CD4-positive, alpha-beta T cell (primary cell): ENCODE measurements at regions of chr16 and their contacts with region 1.

Region 1: DNA sequence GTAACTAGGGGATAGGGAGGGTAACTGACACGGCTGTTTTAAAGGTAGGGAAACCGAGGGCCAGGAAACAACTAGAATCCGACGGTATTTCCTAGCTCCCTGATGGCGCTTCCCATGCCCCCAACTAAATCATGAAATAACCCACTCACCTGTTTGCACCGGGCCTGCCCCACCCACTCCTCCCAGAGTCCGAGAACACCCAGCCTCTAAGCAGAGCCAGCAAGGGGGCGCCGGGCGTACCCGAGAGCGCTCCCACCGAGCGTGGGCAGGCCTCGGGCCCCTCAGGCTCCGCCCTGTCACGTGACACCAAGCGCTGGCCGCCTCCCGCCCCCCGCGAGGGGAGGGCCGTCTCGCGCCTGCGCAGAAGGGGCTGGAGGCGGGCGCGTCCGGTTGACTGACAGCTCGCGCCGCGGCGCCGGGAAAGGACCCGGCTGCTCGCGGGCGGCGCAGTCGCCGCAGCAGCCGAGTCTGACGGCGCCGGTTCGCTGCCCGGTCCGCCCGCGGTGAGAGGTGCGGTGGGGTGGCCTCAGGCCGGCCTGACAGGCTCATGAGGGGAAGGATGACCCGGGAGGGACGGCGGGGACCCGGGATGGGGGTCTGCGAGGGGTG is at the start of gene KIAA0513:
- DNase-seq: peak; percentile 91 to 98 (median 96)
- ATAC-seq: peak; percentile 64
- H3K4me3 ChIP-seq: peak within 1 kb of the TSS; percentile 87
- H3K4me3 Mint-ChIP-seq: peak within 1 kb of the TSS; percentile 98
- H3K27ac ChIP-seq: peak within 1 kb of the TSS; percentile 46 to 77
- H3K27ac Mint-ChIP-seq: peak within 1 kb of the TSS; percentile 93
- H3K4me1 ChIP-seq: peaks cover 35% of the 10 kb centered on the region
- H3K4me1 Mint-ChIP-seq: peaks cover 40% of the 10 kb centered on the region
- H3K27me3 ChIP-seq: no peaks in the 10 kb centered on the region
- H3K27me3 Mint-ChIP-seq: no peaks in the 10 kb centered on the region
- CTCF ChIP-seq: no peak
- total RNA-seq, gene KIAA0513: 9.0 to 10.9 TPM

Region 2: DNA sequence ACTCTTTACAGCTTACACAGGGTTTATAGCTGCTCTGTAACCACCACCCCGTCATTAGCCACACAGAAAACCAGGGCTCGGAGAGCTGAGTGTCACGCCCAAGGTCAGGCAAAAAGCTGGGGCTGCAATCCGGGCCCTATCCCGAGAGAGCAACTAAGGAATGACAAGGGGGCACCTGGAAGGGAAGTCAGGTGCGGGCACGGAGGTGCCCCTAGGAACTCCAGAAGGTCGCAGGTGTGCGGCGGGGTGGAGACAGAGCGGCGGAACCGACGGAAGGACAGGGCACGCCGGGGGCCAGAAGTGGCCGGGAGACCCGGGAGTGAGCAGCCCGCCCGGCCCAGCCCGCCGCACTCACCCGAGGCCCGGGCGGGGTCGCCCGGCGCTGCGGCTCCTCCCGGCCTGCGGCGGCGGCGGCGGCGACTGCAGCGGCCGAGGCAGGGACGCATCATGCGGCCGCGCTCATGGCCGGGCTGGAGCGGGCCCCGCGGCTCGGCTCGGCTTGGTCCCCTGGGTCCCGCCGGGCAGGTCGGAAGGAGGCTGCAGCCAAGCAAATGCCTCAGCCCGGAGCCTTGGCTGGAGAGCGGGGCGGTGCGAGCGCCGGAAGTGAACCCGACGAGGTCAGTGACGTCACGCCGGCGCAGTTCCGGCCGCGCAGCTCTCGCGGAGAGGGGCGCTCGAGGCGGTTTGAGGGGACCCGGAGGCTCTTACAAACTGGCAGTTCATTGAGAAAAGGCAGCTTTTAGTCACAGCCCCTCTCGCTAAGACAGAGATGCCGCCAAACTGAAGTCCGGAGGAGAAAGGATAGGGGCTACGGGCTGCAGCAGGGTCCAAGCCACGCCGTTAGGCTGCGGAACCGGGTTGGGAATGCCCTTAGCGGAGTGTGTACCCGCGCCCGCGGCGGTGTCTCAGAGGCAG is 16.3 kb before region 1 on chr16 and contains the start of gene ZDHHC7:
- CTCF ChIA-PET with region 1: interaction called, 20 read pairs
- POLR2A ChIA-PET with region 1: interaction called, 23 read pairs
- intact Hi-C with region 1: loop called (anchors 1 to 2 kb)
- DNase-seq: peak; percentile 75 to 95 (median 80)
- ATAC-seq: peak; percentile 93
- H3K4me3 ChIP-seq: peak within 1 kb of the TSS; percentile 98
- H3K4me3 Mint-ChIP-seq: peak within 1 kb of the TSS; percentile 99
- H3K27ac ChIP-seq: peak within 1 kb of the TSS; percentile 94 to 98
- H3K27ac Mint-ChIP-seq: peak within 1 kb of the TSS; percentile 96
- H3K4me1 ChIP-seq: peaks cover 31% of the 10 kb centered on the region
- H3K4me1 Mint-ChIP-seq: peaks cover 54% of the 10 kb centered on the region
- H3K27me3 ChIP-seq: no peaks in the 10 kb centered on the region
- H3K27me3 Mint-ChIP-seq: no peaks in the 10 kb centered on the region
- CTCF ChIP-seq: peak; percentile 25
- total RNA-seq, gene ZDHHC7: 39.8 to 44.6 TPM

Region 3: DNA sequence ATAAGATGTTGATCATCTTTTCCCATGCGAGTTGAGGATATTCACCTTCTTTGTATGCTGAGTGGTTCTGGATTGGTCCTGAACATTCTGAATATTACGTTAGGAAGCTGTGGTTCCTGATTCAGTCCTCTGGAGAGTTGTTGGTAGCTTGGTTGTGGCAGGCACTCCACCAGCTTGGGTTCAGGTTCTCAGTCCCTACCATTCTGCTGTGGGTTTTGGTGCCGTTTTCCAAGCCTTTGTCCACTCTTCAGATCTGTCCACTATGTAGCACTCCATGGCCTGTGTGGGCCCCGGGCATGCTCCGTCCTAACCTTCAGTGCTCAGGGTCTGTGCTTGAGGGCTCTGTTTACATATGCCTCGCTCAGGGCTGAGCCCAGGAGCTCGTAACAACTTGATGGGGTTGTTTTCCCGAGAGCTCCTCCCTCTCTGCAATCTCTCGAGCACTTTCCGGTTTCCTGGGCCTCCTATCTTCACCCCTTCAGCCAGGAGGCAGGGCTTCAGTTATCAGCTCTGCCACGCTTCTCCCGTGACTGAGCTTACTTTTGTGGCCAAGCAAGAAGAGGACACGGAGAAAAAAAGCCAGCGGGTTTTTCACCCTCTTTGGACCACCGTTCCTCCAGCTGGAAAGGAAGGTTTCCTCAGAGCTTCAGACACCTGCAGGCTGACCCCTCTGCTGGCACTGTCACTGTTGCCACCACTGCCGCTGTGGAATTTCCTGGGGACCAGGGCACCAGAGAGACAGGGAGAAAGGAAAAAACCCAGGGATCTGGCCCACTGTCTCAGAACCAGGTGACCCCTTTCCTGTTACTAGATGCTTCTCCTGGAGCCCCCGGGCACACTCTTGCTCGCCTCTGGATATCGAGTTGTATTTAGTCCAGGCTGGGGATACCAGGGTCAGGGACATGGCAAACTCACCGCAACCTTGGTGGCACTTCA is 19.7 kb after region 1 on chr16:
- CTCF ChIA-PET with region 1: no interaction called
- POLR2A ChIA-PET with region 1: interaction called, 11 read pairs
- intact Hi-C with region 1: loop called in 1 of 2 experiments (anchors 2 kb)
- DNase-seq: peak in 4 of 14 experiments; percentile 4 to 41 (median 26)
- ATAC-seq: peak; percentile 97
- H3K4me3 ChIP-seq: peak overlapping the region; percentile 5
- H3K4me3 Mint-ChIP-seq: peak overlapping the region; percentile 75
- H3K27ac ChIP-seq: no peak overlapping the region
- H3K27ac Mint-ChIP-seq: peak overlapping the region; percentile 92
- H3K4me1 ChIP-seq: peaks cover 18% of the 10 kb centered on the region
- H3K4me1 Mint-ChIP-seq: peaks cover 42% of the 10 kb centered on the region
- H3K27me3 ChIP-seq: no peaks in the 10 kb centered on the region
- H3K27me3 Mint-ChIP-seq: no peaks in the 10 kb centered on the region
- CTCF ChIP-seq: no peak

Region 4: DNA sequence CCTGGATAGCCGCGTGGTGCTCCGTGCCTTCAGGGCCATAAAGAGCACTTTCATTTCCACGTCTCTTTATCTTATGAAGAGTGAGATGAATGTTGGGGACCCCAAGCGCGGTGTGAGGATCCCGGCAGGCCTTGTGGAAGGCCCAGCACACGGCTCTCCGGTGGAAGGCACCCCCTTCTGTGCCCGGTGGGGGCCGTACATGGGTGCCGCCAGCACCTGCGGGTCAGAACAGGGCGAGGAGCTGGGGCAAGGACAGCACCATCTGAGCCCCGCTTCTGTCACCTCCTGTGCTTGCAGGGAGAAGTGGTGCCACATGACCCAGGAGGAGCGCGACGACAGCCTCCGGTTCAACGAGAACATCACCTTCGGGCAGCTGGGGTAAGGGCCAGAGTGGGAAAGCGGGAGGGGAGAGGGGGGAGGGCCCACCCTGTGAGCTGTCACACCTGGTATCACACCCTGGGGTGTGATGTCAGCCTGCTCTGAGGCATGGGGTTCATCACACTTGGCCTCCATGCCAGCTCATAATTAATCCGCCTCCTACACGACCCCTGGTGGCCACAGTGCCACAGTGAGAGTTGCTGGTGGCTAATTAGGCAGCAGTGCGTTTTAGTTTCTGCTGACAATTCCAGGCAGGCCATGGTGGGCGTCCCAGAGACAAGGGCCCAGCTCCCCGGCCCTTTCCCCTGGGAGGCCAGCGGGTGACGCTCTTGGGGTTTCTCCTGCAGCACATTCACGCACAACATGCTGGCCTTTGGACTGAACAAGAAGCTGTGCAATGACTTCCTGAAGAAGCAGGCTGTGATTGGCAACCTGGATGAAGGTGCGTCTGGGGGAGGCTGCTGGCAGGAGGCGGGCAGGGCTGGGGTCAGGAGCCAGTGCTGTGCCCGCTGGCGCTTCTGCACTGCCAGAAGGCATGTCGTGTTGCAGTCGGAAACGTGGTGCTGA is 59.2 kb after region 1 on chr16:
- CTCF ChIA-PET with region 1: interaction called, 23 read pairs
- POLR2A ChIA-PET with region 1: interaction called, 15 read pairs
- intact Hi-C with region 1: loop called (anchors 1 to 5 kb)
- DNase-seq: peak; percentile 61 to 86 (median 72)
- ATAC-seq: peak; percentile 81
- H3K4me3 ChIP-seq: no peak overlapping the region
- H3K4me3 Mint-ChIP-seq: no peak overlapping the region
- H3K27ac ChIP-seq: no peak overlapping the region
- H3K27ac Mint-ChIP-seq: no peak overlapping the region
- H3K4me1 ChIP-seq: peaks cover 34% of the 10 kb centered on the region
- H3K4me1 Mint-ChIP-seq: peaks cover 39% of the 10 kb centered on the region
- H3K27me3 ChIP-seq: no peaks in the 10 kb centered on the region
- H3K27me3 Mint-ChIP-seq: no peaks in the 10 kb centered on the region
- CTCF ChIP-seq: peak; percentile 55